Activated T-helper 1 cell treated with anti-CD3 and anti-CD28 coated beads, Interleukin-12 subunit alpha, Interleukin-12 subunit beta, Interleukin-2, Interleukin-4 antibody, amounts not matched to agents 30 ng/mL and 10 ng/mL and 1 ng/mL, durations not matched to agents 14 hours and 24 hours and 36 hours (primary cell): ENCODE measurements at regions of chr22 and their contacts with region 1.

Region 1: DNA sequence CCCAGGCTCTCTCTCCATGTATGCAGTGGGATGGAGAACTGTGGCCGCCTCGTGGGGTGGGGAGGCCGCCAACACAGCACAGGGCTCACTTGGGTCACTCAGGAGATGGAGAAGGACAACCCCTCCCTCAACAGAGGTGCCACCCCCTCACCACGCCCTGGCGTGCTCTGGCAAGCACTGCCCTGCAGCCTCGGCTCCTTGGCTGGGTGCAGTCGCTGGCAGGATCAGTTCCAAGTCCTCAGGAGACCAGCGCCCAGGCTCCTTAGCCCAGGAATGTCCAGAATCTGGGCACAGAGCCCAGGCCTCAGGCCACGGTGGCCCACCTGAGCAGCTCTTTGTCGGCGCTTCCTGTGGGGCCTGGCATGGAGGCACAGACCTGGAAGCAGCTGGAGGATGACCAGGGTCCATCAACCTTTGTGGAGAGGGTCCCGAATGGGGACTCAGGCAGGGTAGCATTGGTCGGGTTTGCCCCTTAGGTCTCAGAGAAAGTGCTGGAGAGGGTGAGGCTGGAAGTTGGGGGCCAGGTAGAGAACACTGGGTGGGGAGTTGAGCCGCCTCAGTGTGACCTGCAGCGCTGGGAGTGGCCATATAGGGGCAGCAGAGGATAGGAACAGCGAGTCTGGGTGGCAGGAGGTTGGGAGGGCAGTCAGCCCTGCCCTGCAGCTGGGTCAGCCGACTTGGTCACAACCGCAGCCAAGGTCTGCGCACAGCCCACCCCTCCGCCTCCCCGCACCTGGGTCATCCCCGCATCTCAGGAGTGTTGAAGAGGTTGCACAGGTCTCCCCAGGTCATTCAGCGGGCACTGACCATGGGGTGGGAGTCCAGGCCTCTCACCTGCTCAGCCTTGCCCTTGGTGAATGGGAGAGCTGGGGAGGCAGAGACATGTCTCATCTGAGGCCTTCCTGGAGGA is 8.2 kb downstream of the SUSD2 start:
- DNase-seq: peak; percentile 53
- H3K4me3 Mint-ChIP-seq: no peak overlapping the region
- H3K27ac Mint-ChIP-seq: peak overlapping the region; percentile 28
- H3K4me1 Mint-ChIP-seq: peaks cover 8% of the 10 kb centered on the region
- H3K27me3 Mint-ChIP-seq: no peaks in the 10 kb centered on the region

Region 2: DNA sequence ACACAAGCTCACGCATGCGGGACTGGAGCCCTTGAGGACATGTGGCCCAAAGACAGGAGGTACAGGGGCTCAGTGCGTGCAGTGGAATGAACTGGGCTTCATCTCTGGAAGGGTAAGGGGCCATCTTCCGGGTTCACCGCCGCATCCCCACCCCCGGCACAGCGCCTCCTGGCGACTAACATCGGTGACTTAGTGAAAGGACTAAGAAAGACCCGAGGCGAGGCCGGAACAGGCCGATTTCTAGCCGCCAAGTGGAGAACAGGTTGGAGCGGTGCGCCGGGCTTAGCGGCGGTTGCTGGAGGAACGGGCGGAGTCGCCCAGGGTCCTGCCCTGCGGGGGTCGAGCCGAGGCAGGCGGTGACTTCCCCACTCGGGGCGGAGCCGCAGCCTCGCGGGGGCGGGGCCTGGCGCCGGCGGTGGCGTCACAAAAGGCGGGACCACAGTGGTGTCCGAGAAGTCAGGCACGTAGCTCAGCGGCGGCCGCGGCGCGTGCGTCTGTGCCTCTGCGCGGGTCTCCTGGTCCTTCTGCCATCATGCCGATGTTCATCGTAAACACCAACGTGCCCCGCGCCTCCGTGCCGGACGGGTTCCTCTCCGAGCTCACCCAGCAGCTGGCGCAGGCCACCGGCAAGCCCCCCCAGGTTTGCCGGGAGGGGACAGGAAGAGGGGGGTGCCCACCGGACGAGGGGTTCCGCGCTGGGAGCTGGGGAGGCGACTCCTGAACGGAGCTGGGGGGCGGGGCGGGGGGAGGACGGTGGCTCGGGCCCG is 295.4 kb before region 1 on chr22 and contains the start of gene MIF:
- intact Hi-C with region 1: no loop called
- DNase-seq: peak; percentile 99
- H3K4me3 Mint-ChIP-seq: peak within 1 kb of the TSS; percentile 98
- H3K27ac Mint-ChIP-seq: peak within 1 kb of the TSS; percentile 99
- H3K4me1 Mint-ChIP-seq: peaks cover 22% of the 10 kb centered on the region
- H3K27me3 Mint-ChIP-seq: no peaks in the 10 kb centered on the region
- total RNA-seq, gene MIF: 1,136 and 1,212 TPM in 2 replicates

Region 3: DNA sequence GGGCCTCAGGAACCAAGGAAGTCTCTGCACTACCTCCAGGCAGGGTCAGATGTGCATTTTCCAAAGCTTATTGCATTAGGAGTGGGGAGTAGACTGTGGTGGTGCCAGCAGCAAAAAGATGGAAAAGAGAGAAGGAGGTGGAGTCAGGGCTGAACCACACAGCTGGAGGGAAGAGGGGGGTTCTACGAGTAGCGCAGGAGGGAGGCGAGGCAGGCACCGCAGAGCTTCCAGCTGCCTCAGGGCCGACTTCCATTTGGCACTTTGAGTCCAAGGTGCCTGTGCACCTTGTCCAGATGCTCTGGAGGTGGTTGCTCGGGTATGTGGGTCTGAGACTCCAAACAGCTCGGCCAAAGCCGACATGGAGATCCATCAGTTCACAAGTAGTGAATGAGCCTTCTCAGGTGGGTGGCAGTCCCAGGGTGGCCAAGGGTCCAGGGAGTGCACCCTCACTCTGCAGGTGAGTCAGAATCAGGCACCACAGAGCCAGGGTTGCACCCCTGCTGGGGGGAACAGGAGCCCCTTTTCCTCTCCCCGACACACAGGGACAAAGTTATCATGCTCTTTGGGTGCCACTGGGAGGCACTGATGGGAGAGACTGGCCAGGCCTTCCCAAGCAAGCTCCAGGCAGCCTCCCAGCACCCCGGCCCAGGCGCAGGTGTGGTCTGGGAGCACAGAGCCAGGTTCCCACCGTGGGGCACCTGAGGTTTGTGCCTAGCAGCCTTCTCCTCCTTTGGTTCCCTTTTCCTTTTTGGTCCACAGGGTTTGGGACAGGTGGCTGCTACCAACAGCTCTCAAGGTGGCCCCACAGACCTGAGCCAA is 25.2 kb after region 1 on chr22:
- intact Hi-C with region 1: no loop called
- DNase-seq: no peak
- H3K4me3 Mint-ChIP-seq: no peak overlapping the region
- H3K27ac Mint-ChIP-seq: no peak overlapping the region
- H3K4me1 Mint-ChIP-seq: peaks cover 1% of the 10 kb centered on the region
- H3K27me3 Mint-ChIP-seq: peaks cover 5% of the 10 kb centered on the region

Region 4: DNA sequence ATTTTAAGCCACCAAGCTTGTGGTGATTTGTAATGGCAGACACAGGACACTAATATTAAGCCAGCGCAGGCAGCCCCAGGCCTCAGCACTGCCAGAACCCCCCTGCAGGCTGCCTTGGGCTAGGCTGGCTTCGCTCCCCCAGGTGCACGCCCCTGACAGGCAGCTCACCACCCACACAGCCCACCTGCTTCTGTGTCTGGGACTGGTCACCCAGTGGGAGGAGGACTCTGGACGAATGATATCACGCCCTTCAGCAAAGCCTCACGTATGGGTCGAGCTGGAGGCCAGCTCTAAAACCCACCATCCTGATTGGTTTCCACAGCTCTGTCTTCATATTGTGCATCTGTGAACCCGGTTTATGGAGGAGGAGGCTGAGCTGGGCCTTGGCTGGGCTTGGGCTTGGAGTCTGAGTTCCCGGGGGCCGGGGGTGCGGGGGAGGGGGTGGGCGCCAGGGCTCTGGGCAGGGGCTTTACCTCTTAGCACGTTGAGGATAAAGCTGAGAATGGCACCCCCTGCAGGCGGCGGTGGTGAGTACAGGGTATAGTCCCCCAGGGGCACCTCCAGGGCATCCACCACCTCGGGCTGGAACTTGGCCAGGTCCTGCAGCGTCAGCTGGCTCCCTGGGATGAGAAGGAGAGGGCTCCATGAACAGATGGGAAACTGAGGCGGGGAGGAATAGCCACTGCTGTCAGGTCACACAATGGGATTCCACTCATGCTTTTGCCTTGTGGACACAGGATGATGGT is 41.6 kb after region 1 on chr22:
- intact Hi-C with region 1: loop called (anchors 1 kb)
- DNase-seq: peak; percentile 41
- H3K4me3 Mint-ChIP-seq: no peak overlapping the region
- H3K27ac Mint-ChIP-seq: no peak overlapping the region
- H3K4me1 Mint-ChIP-seq: no peaks in the 10 kb centered on the region
- H3K27me3 Mint-ChIP-seq: no peaks in the 10 kb centered on the region

Region 5: GRCh38 chr22:24247011-24247507 is 57.6 kb after region 1 on chr22:
- intact Hi-C with region 1: loop called (anchors 1 kb)
- DNase-seq: no peak
- H3K4me3 Mint-ChIP-seq: no peak overlapping the region
- H3K27ac Mint-ChIP-seq: no peak overlapping the region
- H3K4me1 Mint-ChIP-seq: peaks cover 23% of the 10 kb centered on the region
- H3K27me3 Mint-ChIP-seq: no peaks in the 10 kb centered on the region